PC-3 (cell line): ENCODE measurements at regions of chr1 and their contacts with region 1.

Region 1: GRCh38 chr1:244451951-244452795 is 464 bp upstream of the ADSS2 start:
- DNase-seq: peak; percentile 100
- ATAC-seq: peak; percentile 95
- H3K4me3 ChIP-seq: peak overlapping the region; percentile 96
- H3K27ac ChIP-seq: peak overlapping the region; percentile 78; the same call in 1 of the 2 replicates
- H3K4me1 ChIP-seq: peaks cover 33% of the 10 kb centered on the region
- H3K27me3 ChIP-seq: no peaks in the 10 kb centered on the region
- CTCF ChIP-seq: peak; percentile 55

Region 2: GRCh38 chr1:244302889-244303613 is 149.1 kb before region 1 on chr1:
- CTCF ChIA-PET with region 1: no interaction called
- POLR2A ChIA-PET with region 1: no interaction called
- intact Hi-C with region 1: loop called (anchors 1 kb)
- DNase-seq: peak; percentile 80
- ATAC-seq: peak; percentile 84
- H3K4me3 ChIP-seq: no peak overlapping the region
- H3K27ac ChIP-seq: no peak overlapping the region
- H3K4me1 ChIP-seq: peaks cover 15% of the 10 kb centered on the region
- H3K27me3 ChIP-seq: no peaks in the 10 kb centered on the region
- CTCF ChIP-seq: no peak

Region 3: DNA sequence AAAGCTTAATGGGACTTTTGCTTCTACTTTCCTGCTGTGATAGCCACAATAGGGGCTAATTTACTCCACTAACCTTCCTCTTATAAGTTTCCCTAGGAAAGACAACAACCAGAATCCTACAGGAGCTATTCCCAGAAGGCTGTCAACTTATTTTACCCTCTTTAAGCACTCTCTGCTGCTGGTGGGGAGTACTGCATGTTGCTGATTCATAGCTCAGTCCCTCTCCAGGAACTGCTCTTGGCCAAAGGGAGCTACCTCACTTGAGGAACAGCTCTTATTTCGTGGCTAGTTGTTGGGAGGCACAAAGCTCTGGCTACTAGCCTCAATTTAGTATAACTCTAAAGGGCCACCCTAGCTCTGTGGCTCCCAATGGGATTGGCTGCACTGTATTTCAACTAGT is 37.6 kb before region 1 on chr1:
- CTCF ChIA-PET with region 1: no interaction called
- POLR2A ChIA-PET with region 1: no interaction called
- intact Hi-C with region 1: loop called (anchors 1 kb)
- DNase-seq: peak; percentile 50
- ATAC-seq: peak; percentile 58
- H3K4me3 ChIP-seq: no peak overlapping the region
- H3K27ac ChIP-seq: no peak overlapping the region
- H3K4me1 ChIP-seq: peaks cover 16% of the 10 kb centered on the region
- H3K27me3 ChIP-seq: no peaks in the 10 kb centered on the region
- CTCF ChIP-seq: peak; percentile 50

Region 4: DNA sequence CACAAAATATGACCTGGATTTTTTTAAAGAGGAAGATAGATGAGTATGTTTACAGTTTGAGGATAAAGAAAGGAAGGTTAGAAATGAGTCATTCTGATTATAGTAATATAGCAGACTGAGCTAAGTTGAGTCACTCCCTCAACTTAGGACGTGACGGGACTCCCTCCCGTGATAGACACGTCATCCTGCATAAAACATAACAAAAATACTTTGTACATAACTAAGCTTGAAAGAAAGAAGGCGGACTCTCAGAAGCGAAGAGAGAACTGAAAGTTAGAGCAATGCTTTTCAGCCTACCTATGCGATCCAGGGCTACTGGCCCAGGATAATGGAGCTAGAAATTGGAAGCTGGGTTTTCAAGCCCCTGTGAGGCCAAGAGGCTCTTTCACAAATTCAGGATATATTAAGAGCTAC is 147.8 kb after region 1 on chr1:
- CTCF ChIA-PET with region 1: no interaction called
- POLR2A ChIA-PET with region 1: no interaction called
- intact Hi-C with region 1: loop called (anchors 5 kb)
- DNase-seq: peak; percentile 98
- ATAC-seq: peak; percentile 95
- H3K4me3 ChIP-seq: peak overlapping the region; percentile 65
- H3K27ac ChIP-seq: peak overlapping the region; percentile 55
- H3K4me1 ChIP-seq: peaks cover 13% of the 10 kb centered on the region
- H3K27me3 ChIP-seq: no peaks in the 10 kb centered on the region
- CTCF ChIP-seq: no peak

Region 5: GRCh38 chr1:244835276-244836134 is 383.3 kb after region 1 on chr1 and contains the start of gene COX20:
- CTCF ChIA-PET with region 1: no interaction called
- POLR2A ChIA-PET with region 1: no interaction called
- intact Hi-C with region 1: loop called (anchors 5 kb)
- DNase-seq: peak; percentile 95
- ATAC-seq: peak; percentile 59
- H3K4me3 ChIP-seq: peak within 1 kb of the TSS; percentile 94
- H3K27ac ChIP-seq: peak within 1 kb of the TSS; percentile 91
- H3K4me1 ChIP-seq: peaks cover 47% of the 10 kb centered on the region
- H3K27me3 ChIP-seq: no peaks in the 10 kb centered on the region
- CTCF ChIP-seq: no peak
- total RNA-seq, gene COX20: 50.0 and 55.8 TPM in 2 replicates